Cardiac septum (tissue), 1 donor: ENCODE measurements at regions of chrX and their contacts with region 1.

Region 1: GRCh38 chrX:68938244-68939004 is 109.6 kb downstream of the EFNB1 start:
- DNase-seq: no peak

Region 2: DNA sequence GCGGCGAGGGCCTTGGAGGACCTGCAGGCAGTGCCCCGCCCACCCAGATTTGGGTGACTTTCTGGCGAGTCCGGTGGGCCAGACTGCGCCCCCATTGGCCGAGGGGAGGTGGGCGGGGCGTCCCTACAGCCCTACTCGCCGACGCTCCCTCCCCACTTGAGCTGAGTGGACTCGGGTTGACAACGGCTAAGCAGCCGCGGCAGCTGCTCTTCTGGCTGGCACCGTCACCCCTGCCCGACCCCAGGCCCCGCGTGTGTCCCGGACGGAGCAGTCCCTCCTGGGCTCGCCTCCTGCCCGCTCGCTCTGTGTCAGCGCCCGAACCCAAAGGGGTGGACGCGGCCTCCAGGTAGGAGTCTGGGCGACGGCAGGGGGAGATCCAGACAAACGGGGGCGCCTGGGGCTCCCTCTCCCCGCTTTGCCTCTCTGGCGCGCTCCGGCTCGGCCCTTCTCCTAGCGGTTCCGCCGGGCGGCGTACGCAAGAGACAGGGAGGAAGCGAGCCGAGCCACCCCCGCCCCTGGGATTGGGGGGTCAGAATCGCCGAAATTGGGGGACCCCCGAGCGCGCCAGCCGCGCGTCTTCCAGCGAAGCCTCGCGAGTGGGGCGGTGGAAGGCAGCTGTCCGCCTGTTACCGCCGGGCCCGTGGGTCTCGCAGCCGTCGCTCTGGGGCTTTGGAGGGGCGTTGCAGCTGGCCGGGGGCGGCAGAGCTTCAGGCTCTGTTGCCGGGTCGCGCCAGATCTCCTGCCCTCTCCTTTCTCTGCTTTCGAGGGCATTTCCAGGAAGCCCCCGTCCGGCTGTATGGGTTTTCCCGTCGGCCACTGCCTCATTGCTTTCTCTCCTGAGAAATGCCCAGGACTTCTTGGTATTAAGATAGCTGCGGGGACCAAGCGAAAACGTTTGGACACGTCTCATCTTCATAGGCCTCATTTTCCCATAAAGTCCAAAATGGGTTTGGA is 244.7 kb before region 1 on chrX:
- intact Hi-C with region 1: no loop called
- DNase-seq: peak; percentile 86

Region 3: DNA sequence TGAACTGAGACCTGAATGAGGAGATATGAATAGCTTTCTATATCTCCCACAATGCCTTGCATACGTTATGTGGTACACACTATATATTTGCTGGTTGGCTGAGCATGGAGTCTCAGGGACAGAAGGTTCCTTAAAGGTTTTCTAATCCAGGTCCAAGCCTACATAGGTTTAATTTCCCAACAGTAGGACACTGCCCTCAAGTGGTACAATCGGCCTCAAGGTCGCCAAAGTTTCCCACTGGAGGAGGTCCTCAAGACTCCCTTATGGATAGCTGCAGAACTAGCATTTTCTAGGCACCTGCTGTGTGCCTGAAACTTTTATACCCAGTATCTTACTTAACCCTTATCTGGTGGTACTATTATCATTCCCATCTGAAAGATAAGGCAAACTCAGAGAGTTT is 130.6 kb before region 1 on chrX:
- intact Hi-C with region 1: no loop called
- DNase-seq: no peak

Region 4: GRCh38 chrX:68894513-68895340 is 43.7 kb before region 1 on chrX:
- intact Hi-C with region 1: loop called (anchors 2 kb)
- DNase-seq: peak; percentile 87

Region 5: GRCh38 chrX:68995780-68996551 is 57.5 kb after region 1 on chrX:
- intact Hi-C with region 1: loop called (anchors 2 kb)
- DNase-seq: peak; percentile 84